Endothelial cell of umbilical vein (primary cell): ENCODE measurements at regions of chr6 and their contacts with region 1.

Region 1: DNA sequence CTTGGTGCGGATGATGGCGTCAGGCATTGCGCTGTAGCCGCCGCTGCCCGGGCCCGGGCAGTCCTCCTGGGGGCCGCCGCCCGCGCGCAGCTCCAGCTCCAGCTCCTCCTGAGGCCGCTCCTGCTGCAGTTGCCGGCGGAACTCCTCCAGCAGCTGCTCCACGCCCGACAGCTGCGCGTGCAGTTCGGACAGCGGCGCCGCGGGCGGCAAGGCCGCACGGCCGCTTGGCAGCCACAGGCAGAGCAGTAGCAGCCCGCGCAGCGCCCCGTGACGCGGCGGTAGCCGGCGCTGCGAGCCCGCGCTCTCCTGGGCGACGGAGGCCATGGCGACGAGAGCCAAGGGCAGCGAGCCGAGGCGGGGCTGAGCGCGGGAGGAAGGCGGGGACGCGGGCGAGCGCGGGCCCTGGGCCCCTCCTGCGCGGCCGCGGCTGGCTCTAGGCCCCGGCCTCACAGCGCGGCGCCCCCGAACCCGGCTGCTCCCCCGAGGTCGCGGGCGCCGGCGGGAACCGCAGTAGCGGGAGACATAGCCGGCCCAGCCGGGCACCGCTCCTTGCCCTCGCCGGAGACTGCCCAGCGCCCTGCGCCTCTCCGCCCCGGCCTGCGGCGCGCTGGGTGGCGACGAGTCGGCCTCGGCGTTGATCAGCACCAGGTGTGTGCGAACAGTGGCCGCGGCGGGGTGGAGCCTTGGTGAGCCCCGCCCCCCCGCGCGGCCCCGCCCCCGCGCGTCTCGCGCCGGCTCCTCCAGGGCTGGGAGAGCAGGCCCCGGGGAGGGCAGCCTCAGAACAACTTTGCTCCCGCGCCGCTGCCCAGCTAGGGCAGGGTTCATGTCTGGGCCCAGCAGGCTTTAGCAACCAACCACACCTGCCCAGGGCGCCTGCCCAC is at the start of gene LRP11:
- DNase-seq: peak; percentile 86
- H3K4me3 ChIP-seq: peak within 1 kb of the TSS; percentile 61 to 91 (median 84)
- H3K27ac ChIP-seq: peak within 1 kb of the TSS; percentile 72
- H3K4me1 ChIP-seq: peaks cover 34% of the 10 kb centered on the region
- H3K27me3 ChIP-seq: no peaks in the 10 kb centered on the region
- CTCF ChIP-seq: no peak
- POLR2A ChIP-seq: peak; percentile 36
- total RNA-seq, gene LRP11: 29.9 and 59.1 TPM in 2 replicates

Region 2: DNA sequence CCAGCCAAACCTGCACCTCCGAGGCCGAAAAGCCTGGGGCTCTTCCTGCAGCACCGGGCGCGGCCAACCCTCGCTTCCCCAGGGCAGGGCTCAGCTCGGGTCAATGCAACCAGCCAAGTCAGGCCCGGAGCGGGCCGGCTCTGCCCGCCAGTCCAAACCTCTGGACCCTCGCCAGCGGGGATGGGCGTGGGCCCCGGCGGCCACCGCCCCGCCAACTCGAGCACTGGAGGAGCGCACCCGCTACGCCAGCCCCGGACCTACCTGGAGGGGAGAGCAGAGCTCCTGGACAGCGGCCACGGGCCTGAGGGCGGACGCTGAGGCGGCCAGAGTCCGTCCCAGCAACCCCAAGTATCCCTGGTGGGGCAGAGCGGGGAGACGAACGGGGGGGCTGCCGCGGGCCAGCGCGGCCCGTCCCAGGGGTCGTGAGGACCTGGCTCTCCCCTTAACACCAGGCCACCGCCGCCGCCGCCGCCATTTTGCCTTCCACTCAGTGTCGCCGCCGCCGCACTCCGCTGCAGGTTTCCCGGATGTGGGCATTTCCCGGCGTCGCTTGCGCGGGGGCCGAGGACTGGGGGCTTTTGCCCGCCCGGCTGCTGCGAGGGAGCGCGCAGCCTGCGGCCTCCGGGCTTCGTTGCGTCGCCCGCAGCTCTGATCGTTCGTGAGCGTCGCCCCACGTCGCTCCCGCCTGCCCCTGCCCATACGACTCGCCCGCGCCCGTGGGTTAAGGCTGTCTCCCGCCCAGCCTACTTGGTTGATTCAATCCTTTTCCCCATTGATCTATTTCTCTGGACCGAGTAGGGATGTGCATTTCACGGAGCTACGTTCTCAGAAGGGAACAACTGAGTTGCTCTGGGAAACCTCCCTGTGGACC is 146.1 kb before region 1 on chr6 and contains the start of gene LATS1:
- CTCF ChIA-PET with region 1: no interaction called
- POLR2A ChIA-PET with region 1: no interaction called
- dilution Hi-C with region 1: no loop called
- intact Hi-C with region 1: loop called (anchors 2 kb)
- DNase-seq: peak; percentile 84
- H3K4me3 ChIP-seq: peak within 1 kb of the TSS; percentile 65 to 98 (median 96)
- H3K27ac ChIP-seq: peak within 1 kb of the TSS; percentile 81
- H3K4me1 ChIP-seq: peaks cover 16% of the 10 kb centered on the region
- H3K27me3 ChIP-seq: no peaks in the 10 kb centered on the region
- CTCF ChIP-seq: no peak
- POLR2A ChIP-seq: peak; percentile 98
- total RNA-seq, gene LATS1: 27.6 and 28.7 TPM in 2 replicates

Region 3: DNA sequence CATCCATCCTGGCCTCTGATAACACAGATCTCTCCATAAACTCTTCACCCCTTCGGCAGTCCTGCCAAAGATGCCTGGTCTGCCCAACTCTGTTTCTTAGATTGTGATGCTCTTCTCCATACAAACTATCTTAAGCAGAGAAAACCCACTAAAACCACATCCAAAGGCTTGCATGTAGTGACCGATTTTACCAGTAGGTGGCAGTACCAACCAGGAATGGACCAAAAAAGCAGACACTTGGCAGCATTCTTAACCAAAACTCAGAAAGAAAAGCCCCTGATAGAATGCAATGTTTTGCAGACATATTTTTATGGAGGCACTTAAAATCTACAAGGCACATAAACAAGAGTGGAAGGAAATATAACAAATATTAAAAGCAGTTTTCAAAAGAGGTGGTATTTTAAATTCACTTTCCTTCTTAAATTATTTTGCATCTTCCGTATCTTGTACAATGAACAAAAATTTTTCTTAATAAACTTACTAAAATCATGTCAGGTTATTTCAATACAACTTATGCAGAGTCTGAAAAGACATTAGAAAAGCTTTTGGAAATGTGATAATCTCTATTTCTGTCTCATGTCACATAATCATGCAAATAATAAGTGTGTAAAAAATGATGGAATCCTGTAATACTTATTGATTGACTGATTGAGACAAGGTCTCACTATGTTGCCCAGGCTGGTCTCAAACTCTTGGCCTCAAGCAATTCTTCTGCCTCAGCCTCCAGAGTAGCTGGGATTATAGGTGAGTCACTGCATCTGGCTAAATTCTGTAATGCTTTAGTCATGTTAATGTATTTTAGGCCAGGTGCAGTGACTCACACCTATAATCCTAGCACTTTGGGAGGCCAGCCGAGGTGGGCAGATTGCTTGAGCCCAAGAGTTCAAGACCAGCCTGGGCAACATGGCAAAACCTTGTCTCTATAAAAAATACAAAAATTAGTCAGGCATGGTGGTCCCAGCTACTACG is 29.1 kb before region 1 on chr6:
- CTCF ChIA-PET with region 1: interaction called, 21 read pairs
- POLR2A ChIA-PET with region 1: no interaction called
- dilution Hi-C with region 1: no loop called
- intact Hi-C with region 1: loop called (anchors 1 kb)
- DNase-seq: peak; percentile 80
- H3K4me3 ChIP-seq: no peak overlapping the region
- H3K27ac ChIP-seq: no peak overlapping the region
- H3K4me1 ChIP-seq: no peaks in the 10 kb centered on the region
- H3K27me3 ChIP-seq: no peaks in the 10 kb centered on the region
- CTCF ChIP-seq: peak; percentile 77
- POLR2A ChIP-seq: no peak

Region 4: GRCh38 chr6:149846321-149846720 is 17.6 kb before region 1 on chr6:
- CTCF ChIA-PET with region 1: interaction called, 40 read pairs
- POLR2A ChIA-PET with region 1: interaction called, 5 read pairs
- dilution Hi-C with region 1: no loop called
- intact Hi-C with region 1: no loop called
- DNase-seq: no peak
- H3K4me3 ChIP-seq: no peak overlapping the region
- H3K27ac ChIP-seq: no peak overlapping the region
- H3K4me1 ChIP-seq: peaks cover 12% of the 10 kb centered on the region
- H3K27me3 ChIP-seq: no peaks in the 10 kb centered on the region
- CTCF ChIP-seq: no peak
- POLR2A ChIP-seq: no peak

Region 5: DNA sequence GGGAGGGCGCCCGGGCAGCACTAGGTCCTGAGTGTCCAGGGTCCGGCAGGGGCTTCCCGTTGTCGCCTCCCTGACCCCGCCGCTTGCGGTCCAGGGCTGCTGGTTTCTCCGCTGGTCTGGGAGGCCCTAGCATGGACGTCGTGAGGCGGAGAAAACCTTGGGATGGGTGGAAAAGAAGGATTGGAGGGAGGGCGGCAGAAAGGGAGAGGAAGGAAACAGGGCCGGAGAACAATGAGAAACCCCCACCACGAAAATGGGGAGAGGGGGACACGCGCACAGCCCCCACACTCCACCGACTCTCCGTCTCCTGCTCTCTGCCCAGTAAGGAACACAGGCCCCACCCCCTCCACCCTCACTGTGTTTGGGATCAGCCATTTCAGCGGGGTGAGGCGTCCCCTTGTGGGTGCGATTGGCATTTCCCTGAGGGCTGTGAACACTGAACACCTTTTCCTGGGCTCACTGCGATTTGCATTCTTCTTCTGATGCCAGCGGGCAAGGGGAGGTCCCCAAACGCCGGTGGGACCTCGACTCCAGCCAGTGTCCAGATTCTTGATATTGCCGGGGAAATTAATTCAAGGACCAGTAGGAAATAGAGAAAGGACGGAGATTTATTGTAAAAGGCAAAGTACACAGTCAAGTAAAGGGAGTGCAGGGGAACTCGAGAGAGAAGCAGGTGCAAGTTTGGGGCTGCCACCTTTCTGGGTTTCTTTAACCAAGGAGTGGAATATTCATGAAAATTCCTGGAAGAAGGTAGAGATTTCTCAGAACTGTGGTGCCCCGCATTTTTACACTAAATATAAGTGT is 62.2 kb after region 1 on chr6:
- CTCF ChIA-PET with region 1: interaction called, 4 read pairs
- POLR2A ChIA-PET with region 1: no interaction called
- dilution Hi-C with region 1: no loop called
- intact Hi-C with region 1: loop called (anchors 1 kb)
- DNase-seq: peak; percentile 80
- H3K4me3 ChIP-seq: peak overlapping the region; percentile 19 to 47 (median 45)
- H3K27ac ChIP-seq: no peak overlapping the region
- H3K4me1 ChIP-seq: peaks cover 4% of the 10 kb centered on the region
- H3K27me3 ChIP-seq: peaks cover 20 to 21% of the 10 kb centered on the region in 2 experiments
- CTCF ChIP-seq: peak; percentile 72 to 91
- POLR2A ChIP-seq: no peak